Activated naive CD4-positive, alpha-beta T cell treated with anti-CD3 and anti-CD28 coated beads for 36 hours (primary cell): ENCODE measurements at regions of chr6 and their contacts with region 1.

Region 1: GRCh38 chr6:83884523-83884922 is 25.0 kb downstream of the CYB5R4 start:
- DNase-seq: no peak
- H3K4me3 Mint-ChIP-seq: no peak overlapping the region
- H3K27ac Mint-ChIP-seq: no peak overlapping the region
- H3K4me1 Mint-ChIP-seq: peaks cover 22% of the 10 kb centered on the region
- H3K27me3 Mint-ChIP-seq: no peaks in the 10 kb centered on the region

Region 2: DNA sequence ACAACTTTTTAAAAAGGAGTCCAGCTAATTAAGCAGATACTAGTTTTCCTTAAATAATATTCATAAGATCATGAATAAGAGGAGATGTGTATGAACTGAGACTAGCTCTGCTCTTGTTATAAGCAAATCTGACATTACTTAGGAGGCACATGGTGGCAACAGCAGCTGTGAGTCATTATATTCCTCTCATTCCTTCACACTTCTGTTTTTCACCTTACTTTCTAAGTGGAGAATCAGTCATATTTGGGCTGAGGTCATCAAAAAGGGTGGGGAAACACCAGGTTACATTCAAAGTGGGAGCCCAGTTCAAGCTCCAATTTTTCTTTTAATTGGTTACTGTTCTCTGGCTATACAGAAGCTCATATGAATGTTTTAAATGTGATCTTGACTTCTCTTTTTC is 37.3 kb before region 1 on chr6:
- CTCF ChIA-PET with region 1: no interaction called
- intact Hi-C with region 1: no loop called
- DNase-seq: peak; percentile 8
- H3K4me3 Mint-ChIP-seq: no peak overlapping the region
- H3K27ac Mint-ChIP-seq: no peak overlapping the region
- H3K4me1 Mint-ChIP-seq: peaks cover 2% of the 10 kb centered on the region
- H3K27me3 Mint-ChIP-seq: peaks cover 39% of the 10 kb centered on the region

Region 3: DNA sequence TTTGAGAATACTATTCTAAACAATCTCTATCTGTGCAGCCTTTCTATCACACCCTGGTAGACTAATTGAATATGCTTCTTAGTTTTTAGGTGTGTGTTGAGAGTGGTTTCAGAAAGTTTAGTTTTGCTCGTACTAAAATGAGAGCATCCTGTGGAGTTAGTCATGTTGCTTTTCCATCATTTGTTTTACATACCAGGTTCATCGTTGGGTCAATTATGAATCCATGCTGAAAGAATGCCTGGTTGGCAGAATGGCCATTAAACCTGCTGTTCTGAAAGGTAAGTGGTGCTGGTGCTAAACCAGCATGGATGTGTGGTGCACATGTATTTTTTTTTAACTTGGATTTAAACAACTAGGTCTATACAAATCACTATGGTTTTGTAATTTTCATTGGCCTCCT is 24.3 kb after region 1 on chr6:
- CTCF ChIA-PET with region 1: no interaction called
- intact Hi-C with region 1: no loop called
- DNase-seq: no peak
- H3K4me3 Mint-ChIP-seq: no peak overlapping the region
- H3K27ac Mint-ChIP-seq: no peak overlapping the region
- H3K4me1 Mint-ChIP-seq: peaks cover 18% of the 10 kb centered on the region
- H3K27me3 Mint-ChIP-seq: no peaks in the 10 kb centered on the region

Region 4: DNA sequence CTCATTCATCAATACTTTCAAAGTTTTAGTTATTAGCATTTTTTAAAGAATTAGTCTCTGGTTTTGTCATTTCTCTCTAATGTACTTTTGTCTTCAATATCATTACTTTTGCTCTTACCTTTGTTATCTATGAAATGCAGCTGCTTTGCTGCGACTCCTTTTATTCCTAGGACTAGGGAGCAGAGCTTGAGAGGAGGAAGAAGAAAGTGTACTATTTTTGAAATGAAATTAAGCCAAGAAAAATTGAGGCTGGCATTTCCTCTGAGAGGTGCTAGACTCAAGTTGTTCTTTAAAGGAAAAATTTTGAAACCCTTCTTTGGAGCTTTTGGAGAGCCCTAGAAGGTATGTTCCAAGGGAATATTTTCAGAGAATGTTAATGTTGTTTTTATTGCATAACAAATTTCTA is 100.8 kb after region 1 on chr6:
- CTCF ChIA-PET with region 1: no interaction called
- intact Hi-C with region 1: no loop called
- DNase-seq: no peak
- H3K4me3 Mint-ChIP-seq: no peak overlapping the region
- H3K27ac Mint-ChIP-seq: no peak overlapping the region
- H3K4me1 Mint-ChIP-seq: no peaks in the 10 kb centered on the region
- H3K27me3 Mint-ChIP-seq: no peaks in the 10 kb centered on the region

Region 5: DNA sequence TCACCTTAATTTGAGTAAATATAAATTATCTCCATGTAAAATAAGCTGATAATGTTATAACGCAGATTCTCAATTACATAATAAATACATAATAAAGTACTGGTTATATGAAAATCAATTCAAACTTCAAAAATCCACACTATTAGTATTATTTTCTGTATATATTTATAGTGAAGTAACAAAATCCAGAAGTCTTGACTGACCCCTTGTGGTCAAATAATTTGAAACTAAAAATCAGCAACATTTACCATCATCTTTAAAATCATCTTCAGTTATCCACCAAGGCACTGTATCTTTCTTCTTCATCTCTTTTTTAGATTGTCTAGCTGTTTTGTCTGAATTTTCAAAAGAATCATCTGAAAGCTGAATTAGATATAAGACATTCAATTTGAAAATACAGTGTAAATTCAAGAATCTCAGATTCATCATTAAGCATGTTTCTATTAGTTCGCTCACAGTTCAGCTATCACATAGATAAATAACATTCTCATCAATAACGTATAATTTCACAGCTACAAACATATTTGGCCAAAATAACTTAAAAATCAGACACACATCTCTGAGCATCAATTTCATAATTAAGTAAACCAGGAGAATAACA is 336.4 kb after region 1 on chr6:
- CTCF ChIA-PET with region 1: interaction called, 5 read pairs
- intact Hi-C with region 1: loop called (anchors 1 kb)
- DNase-seq: no peak
- H3K4me3 Mint-ChIP-seq: no peak overlapping the region
- H3K27ac Mint-ChIP-seq: no peak overlapping the region
- H3K4me1 Mint-ChIP-seq: peaks cover 4% of the 10 kb centered on the region
- H3K27me3 Mint-ChIP-seq: no peaks in the 10 kb centered on the region

Region 6: GRCh38 chr6:84227434-84228197 is 343.1 kb after region 1 on chr6 and contains the start of gene CEP162:
- CTCF ChIA-PET with region 1: interaction called, 15 read pairs
- intact Hi-C with region 1: loop called (anchors 1 kb)
- DNase-seq: peak; percentile 91
- H3K4me3 Mint-ChIP-seq: peak within 1 kb of the TSS; percentile 99
- H3K27ac Mint-ChIP-seq: peak within 1 kb of the TSS; percentile 93
- H3K4me1 Mint-ChIP-seq: peaks cover 11% of the 10 kb centered on the region
- H3K27me3 Mint-ChIP-seq: peaks cover 5% of the 10 kb centered on the region
- total RNA-seq, gene CEP162: 4.4 to 5.0 TPM

Region 7: DNA sequence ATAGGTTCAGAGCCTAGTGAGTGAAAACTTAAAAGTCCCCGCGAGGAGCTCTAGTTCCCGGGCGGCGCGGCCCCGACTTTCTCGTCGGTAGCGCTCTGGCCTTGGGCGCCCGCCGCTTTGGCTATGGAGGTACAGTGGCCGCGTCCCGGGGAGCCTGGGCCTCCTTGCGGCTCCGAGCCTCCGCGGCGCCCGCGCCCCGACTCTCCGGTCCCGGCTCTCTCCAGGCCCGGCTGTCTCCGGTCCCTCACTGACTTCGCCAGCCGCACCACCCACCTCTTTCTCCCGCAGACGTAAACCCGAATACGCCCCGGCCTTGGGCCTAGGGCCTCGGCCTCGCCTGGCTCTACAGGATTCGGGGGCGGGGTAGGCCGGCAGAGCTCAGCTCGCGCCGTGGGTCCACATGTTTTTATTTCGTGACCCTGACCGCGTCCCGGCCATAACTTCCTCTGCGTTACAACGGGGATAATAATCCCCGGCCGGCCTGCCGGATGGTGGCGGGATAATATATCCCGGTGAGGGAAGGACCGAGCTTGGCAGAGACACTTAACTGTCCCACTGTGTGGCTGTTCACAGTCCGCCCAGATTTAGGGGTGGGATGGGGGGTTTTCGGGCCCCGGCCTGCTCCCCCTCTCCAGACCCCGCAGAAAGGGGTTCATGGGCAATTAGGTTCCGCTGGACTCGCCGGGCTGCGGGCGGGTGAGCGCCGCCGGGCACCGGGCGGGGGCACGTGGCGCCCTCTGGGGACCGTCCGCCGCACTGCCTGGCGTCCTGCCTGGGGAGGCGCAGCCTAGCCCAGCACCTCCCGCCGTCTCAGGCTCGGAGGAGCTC is 889.8 kb after region 1 on chr6:
- CTCF ChIA-PET with region 1: no interaction called
- intact Hi-C with region 1: loop called (anchors 2 kb)
- DNase-seq: peak; percentile 30
- H3K4me3 Mint-ChIP-seq: no peak overlapping the region
- H3K27ac Mint-ChIP-seq: no peak overlapping the region
- H3K4me1 Mint-ChIP-seq: peaks cover 8% of the 10 kb centered on the region
- H3K27me3 Mint-ChIP-seq: peaks cover 61% of the 10 kb centered on the region

Region 8: DNA sequence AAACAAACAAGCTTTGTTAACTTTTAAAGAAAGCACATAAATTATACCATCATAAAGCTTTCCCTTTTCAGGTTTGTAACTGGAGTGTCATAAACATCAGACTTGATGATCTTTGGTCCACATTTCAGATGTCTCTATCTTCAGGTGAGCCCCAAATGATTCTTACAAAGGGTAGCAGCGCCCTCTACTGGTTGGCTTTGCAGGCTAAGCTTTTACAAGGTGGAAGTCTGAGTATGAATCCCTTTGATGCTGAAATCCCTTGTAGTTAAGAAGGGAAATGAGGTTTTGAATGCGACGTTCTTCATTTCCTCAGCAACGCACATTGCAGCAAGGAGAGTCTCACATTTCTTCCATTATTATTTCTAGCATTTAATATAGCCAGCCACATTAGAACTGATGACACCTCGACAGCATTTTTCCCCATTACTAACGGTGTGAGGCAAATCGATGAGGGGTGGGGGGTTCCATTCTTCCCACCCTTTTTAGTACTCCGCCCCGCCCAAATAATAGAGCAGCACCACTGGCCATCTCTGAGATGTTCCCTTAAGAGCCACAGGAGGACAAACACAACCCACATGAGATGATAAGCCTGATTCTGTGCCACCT is 1439.0 kb after region 1 on chr6:
- CTCF ChIA-PET with region 1: no interaction called
- intact Hi-C with region 1: loop called (anchors 1 kb)
- DNase-seq: peak; percentile 88
- H3K4me3 Mint-ChIP-seq: no peak overlapping the region
- H3K27ac Mint-ChIP-seq: no peak overlapping the region
- H3K4me1 Mint-ChIP-seq: no peaks in the 10 kb centered on the region
- H3K27me3 Mint-ChIP-seq: peaks cover 6% of the 10 kb centered on the region